ENCODE measurements at regions of chr11 and their contacts with region 1.

Region 1: GRCh38 chr11:21736404-21736803 is 456.5 kb upstream of the ANO5 start:
- DNase-seq: no peak
- ATAC-seq: no peak
- H3K4me3 ChIP-seq: no peak overlapping the region
- H3K27ac ChIP-seq: no peak overlapping the region
- H3K4me1 ChIP-seq: no peaks in the 10 kb centered on the region
- H3K27me3 ChIP-seq: peaks cover 0 to 2% of the 10 kb centered on the region in 2 donors

Region 2: DNA sequence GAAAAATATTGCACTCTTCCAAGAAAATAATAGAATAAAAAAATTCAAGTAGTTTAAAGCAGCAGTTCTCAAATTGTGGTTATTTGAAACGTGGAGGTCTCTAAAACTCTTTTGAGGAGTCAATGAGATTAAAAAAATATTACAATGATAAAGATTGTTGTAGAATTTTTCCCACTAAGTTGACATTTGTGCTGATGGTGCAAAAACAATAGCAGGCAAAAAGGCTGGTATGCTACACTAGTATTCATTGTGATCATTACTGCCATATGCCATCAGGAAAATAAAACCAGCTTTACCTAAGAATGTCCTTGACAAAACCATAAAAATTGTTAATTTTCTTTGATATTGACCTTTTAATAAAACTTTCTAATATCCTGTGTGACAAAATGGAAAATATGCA is 48.8 kb before region 1 on chr11:
- intact Hi-C with region 1: loop called in 1 of 2 experiments (anchors 5 kb)
- DNase-seq: no peak
- ATAC-seq: no peak
- H3K4me3 ChIP-seq: no peak overlapping the region
- H3K27ac ChIP-seq: no peak overlapping the region
- H3K4me1 ChIP-seq: no peaks in the 10 kb centered on the region
- H3K27me3 ChIP-seq: no peaks in the 10 kb centered on the region

Measured in aorta (tissue), 5 donors.